HepG2 (cell line): ENCODE measurements at regions of chr6 and their contacts with region 1.

Region 1: GRCh38 chr6:13574149-13574570 is 241 bp upstream of the SIRT5 start:
- DNase-seq: peak; percentile 96
- ATAC-seq: peak; percentile 92
- H3K4me3 ChIP-seq: peak overlapping the region; percentile 87 to 94 (median 88)
- H3K27ac ChIP-seq: peak overlapping the region; percentile 99
- H3K4me1 ChIP-seq: peaks cover 40% of the 10 kb centered on the region
- H3K27me3 ChIP-seq: no peaks in the 10 kb centered on the region
- CTCF ChIP-seq: peak; percentile 45; the same call in 1 of the 2 replicates
- EP300 ChIP-seq: no peak; a peak in 1 of 4 replicates
- POLR2A ChIP-seq: peak in 1 of 2 experiments; percentile 84; a peak in 2 of 4 replicates
- RAD21 ChIP-seq: peak; percentile 85

Region 2: DNA sequence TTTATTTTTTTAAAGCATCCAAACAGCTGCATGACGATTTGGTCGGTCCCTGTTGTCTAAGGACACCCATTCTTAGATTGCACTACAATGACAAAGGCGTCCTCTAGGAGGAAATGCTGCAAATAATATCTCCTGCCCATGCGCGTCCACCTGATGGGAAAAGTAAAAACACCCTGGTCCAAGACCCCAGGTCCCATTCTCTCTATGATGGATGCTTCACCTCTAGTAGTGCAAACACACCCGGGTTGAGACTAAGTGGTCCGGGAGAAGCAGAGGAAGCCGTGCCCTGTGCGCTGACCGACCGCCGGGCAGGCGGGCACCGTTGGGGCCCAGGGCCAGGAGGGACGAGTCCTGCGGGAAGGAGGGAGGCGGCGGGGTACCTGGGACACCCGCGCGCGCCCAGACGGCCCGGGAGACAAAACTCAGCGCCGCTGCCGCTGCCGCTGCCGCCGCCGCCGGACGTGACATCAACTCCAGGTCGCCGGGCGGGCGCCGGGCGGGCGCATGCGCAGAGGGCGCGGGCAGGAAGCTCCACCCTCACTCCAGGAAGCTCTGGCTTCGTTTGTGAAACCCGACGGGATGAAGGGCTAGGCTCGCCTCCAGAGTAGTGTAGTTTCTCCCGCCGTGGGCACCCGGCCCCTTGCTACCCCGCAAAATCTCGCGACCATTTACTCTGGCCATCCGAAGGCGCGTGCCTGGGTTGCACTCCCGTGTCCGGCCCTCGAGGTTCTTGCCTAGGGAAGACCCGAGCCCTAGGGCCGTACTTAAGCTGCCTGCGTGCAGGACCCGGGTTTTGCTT is 245.9 kb before region 1 on chr6 and contains the start of gene TBC1D7:
- CTCF ChIA-PET with region 1: no interaction called
- POLR2A ChIA-PET with region 1: interaction called, 24 read pairs
- in situ Hi-C with region 1: no loop called
- intact Hi-C with region 1: no loop called
- DNase-seq: peak; percentile 92
- ATAC-seq: peak; percentile 92
- H3K4me3 ChIP-seq: peak within 1 kb of the TSS; percentile 72 to 92 (median 90)
- H3K27ac ChIP-seq: peak within 1 kb of the TSS; percentile 81
- H3K4me1 ChIP-seq: peaks cover 45% of the 10 kb centered on the region
- H3K27me3 ChIP-seq: peaks cover 0 to 4% of the 10 kb centered on the region in 2 experiments; a peak in 2 of 5 replicates
- CTCF ChIP-seq: peak; percentile 28
- EP300 ChIP-seq: no peak
- POLR2A ChIP-seq: peak; percentile 74 to 94
- RAD21 ChIP-seq: peak; percentile 22; the same call in 1 of the 2 replicates
- total RNA-seq, gene TBC1D7: 23.3 and 28.5 TPM in 2 replicates

Region 3: DNA sequence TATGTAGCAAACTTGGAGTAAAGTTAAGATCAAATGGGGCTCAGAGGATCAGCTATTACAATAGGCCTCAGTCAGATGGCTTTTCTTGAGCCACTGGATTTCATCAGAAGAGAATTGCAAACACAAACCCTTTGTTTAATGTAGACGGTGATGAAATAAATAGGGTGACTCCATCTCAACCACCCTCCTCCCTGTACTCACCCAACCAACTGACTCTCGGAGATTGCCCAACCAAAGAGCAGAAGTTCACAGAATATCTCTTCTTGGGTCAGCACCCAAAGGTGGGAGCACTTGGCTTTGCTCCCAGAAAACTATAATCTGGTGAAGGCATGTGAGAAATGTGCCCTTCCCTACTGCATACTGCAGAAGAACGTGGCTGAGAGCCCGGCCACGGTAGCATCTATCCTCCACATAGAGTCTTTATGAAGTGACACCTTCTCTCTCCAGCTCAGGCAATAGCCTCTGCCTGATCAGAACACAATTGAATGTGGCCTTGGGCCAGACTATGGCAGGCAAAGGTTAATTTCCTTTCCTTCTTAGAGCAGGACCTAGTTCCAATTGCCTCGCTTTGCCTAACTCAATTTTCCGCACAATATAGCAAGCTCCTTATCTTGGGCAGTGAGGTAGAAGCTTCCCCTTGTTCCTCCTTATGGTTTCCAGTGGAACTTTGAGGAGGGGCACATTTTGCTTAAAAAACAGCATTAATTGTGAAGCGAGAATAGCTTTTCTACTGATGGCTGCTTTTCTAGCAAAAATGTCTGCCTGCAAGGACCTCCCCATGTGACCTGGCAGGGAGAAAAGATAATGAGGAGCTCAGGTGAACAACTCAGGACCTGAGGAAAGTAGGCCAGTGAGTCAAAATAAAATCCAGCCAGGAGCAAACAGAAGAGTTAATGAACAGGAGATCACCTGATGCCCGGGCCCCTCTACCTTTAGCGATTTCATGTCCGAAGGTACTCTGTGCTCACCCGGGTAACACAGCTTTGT is 166.2 kb before region 1 on chr6:
- CTCF ChIA-PET with region 1: no interaction called
- POLR2A ChIA-PET with region 1: interaction called, 26 read pairs
- in situ Hi-C with region 1: no loop called
- intact Hi-C with region 1: no loop called
- DNase-seq: peak; percentile 100
- ATAC-seq: peak; percentile 82
- H3K4me3 ChIP-seq: peak overlapping the region; percentile 8 to 23 (median 19); a peak in 4 of 6 replicates
- H3K27ac ChIP-seq: peak overlapping the region; percentile 78
- H3K4me1 ChIP-seq: peaks cover 74% of the 10 kb centered on the region
- H3K27me3 ChIP-seq: no peaks in the 10 kb centered on the region
- CTCF ChIP-seq: no peak
- EP300 ChIP-seq: peak; percentile 91 to 96
- POLR2A ChIP-seq: peak in 1 of 2 experiments; percentile 39; a peak in 1 of 4 replicates
- RAD21 ChIP-seq: peak; percentile 12; the same call in 1 of the 2 replicates

Region 4: DNA sequence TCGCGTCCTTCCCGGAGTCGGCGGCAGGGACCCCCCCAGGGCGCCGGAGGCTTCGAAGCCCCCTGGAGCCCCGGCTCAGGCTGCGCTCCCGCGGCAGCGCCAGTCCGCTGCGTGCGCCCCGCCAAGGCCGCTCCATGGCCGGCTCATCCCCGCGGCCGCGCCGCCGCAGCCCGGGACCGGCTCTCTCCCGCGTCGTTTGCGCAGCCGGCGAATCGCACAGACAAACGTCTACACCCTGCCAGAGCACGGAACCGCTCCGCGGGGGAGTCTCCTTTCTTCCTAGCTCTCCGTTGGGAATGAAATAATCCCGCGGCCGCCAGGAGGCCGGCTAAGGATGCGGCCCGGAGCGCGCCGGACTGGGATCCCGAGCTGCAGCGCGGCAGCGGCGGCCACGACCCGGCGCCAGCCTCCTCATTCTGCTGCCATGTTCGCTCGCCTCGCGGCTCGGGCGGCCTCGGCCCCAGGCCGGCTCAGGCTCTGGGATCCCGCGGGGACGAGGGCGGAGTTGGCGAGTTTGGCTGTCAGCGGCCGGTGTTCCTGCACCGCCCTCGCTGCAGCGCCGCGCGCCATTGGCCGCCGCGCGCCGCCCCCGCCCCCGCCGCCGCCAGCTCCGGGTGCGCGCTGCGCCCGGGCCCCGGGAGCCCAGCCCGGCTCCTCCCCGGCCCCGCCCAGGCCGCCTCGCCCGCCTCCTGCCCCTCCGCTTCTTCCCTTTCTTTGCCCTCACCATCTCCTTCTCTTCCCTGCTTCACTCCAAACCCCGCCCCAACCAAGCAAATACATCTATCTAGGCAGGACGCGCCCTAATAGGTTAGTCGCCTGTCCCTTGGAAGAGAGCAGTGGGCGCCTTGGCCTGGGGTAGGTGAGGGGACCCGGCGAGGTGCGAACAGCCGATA is 86.8 kb before region 1 on chr6 and contains the start of gene GFOD1:
- CTCF ChIA-PET with region 1: no interaction called
- POLR2A ChIA-PET with region 1: interaction called, 22 read pairs
- in situ Hi-C with region 1: no loop called
- intact Hi-C with region 1: loop called (anchors 1 kb)
- DNase-seq: peak; percentile 63
- ATAC-seq: peak; percentile 80
- H3K4me3 ChIP-seq: peak within 1 kb of the TSS; percentile 69 to 82 (median 80)
- H3K27ac ChIP-seq: peak within 1 kb of the TSS; percentile 25
- H3K4me1 ChIP-seq: peaks cover 47% of the 10 kb centered on the region
- H3K27me3 ChIP-seq: no peaks in the 10 kb centered on the region; a peak in 1 of 5 replicates
- CTCF ChIP-seq: no peak
- EP300 ChIP-seq: no peak
- POLR2A ChIP-seq: peak; percentile 44 to 70; a peak in 3 of 4 replicates
- RAD21 ChIP-seq: peak; percentile 76
- total RNA-seq, gene GFOD1: 6.4 TPM in 2 replicates

Region 5: DNA sequence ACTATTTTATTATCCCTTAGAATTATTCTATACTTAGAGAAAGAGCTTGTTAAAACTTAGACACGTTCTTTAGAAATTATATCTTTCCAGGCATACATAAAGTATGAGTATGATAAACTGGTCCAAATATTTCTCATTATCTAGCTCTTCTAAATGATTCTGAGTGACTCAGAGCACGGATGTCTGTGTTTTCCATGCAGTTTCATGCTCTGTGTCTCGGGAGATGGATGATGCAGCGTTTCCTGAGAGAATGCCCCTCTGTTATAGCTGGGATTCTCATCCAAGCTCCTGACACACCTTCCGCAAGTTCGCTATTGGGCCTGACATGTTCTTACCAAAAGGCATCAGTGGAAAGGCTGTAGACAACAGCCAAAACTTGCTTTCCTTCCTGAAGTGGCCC is 19.6 kb after region 1 on chr6:
- CTCF ChIA-PET with region 1: no interaction called
- POLR2A ChIA-PET with region 1: interaction called, 15 read pairs
- in situ Hi-C with region 1: no loop called
- intact Hi-C with region 1: no loop called
- DNase-seq: no peak
- ATAC-seq: no peak
- H3K4me3 ChIP-seq: no peak overlapping the region
- H3K27ac ChIP-seq: no peak overlapping the region
- H3K4me1 ChIP-seq: no peaks in the 10 kb centered on the region
- H3K27me3 ChIP-seq: no peaks in the 10 kb centered on the region
- CTCF ChIP-seq: no peak
- EP300 ChIP-seq: no peak
- POLR2A ChIP-seq: no peak
- RAD21 ChIP-seq: no peak

Region 6: DNA sequence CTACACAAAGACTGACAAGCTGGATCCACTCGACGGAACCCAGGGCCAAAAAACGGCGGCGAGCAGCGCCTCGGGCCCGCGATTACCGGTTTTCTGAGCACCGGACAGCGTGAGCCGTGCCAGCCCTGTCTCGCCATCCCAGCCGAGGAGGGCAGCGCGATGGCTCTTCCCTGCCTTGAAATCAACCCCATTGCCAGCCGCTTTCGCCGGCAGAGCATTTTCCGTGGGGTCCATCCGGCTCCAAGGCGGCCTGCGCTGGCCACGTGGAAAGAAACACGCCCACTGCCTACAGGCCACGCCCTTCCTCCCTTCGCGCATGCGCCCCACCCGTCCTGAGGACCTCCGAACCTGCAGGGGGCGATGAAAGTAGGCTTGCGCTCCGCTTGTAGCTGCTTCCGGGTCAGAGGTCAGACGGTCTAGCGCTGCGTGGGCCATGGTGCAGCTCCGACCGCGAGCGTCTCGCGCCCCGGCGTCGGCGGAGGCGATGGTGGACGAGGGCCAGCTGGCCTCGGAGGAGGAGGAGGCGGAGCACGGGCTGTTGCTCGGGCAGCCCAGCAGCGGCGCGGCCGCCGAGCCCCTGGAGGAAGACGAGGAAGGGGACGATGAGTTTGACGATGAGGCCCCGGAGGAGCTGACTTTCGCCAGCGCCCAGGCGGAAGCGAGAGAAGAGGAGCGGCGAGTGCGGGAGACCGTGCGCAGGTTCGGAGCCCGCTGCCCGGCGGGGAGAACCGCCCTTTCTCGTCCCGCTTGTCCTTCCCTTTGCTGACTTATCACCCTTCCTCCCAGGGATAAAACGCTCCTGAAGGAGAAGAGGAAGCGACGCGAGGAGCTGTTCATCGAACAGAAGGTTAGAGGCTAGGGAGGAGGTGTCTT is 41.0 kb after region 1 on chr6 and contains the start of gene NOL7:
- CTCF ChIA-PET with region 1: no interaction called
- POLR2A ChIA-PET with region 1: interaction called, 119 read pairs
- in situ Hi-C with region 1: loop called (anchors 5 kb)
- intact Hi-C with region 1: loop called (anchors 1 kb)
- DNase-seq: peak; percentile 97
- ATAC-seq: peak; percentile 92
- H3K4me3 ChIP-seq: peak within 1 kb of the TSS; percentile 89 to 97 (median 93)
- H3K27ac ChIP-seq: peak within 1 kb of the TSS; percentile 91
- H3K4me1 ChIP-seq: peaks cover 35% of the 10 kb centered on the region
- H3K27me3 ChIP-seq: no peaks in the 10 kb centered on the region; a peak in 1 of 5 replicates
- CTCF ChIP-seq: peak; percentile 100
- EP300 ChIP-seq: peak in 1 of 2 experiments; percentile 11; a peak in 1 of 4 replicates
- POLR2A ChIP-seq: peak; percentile 93 to 96
- RAD21 ChIP-seq: peak; percentile 55; the same call in 1 of the 2 replicates
- total RNA-seq, gene NOL7: 186 and 215 TPM in 2 replicates

Region 7: DNA sequence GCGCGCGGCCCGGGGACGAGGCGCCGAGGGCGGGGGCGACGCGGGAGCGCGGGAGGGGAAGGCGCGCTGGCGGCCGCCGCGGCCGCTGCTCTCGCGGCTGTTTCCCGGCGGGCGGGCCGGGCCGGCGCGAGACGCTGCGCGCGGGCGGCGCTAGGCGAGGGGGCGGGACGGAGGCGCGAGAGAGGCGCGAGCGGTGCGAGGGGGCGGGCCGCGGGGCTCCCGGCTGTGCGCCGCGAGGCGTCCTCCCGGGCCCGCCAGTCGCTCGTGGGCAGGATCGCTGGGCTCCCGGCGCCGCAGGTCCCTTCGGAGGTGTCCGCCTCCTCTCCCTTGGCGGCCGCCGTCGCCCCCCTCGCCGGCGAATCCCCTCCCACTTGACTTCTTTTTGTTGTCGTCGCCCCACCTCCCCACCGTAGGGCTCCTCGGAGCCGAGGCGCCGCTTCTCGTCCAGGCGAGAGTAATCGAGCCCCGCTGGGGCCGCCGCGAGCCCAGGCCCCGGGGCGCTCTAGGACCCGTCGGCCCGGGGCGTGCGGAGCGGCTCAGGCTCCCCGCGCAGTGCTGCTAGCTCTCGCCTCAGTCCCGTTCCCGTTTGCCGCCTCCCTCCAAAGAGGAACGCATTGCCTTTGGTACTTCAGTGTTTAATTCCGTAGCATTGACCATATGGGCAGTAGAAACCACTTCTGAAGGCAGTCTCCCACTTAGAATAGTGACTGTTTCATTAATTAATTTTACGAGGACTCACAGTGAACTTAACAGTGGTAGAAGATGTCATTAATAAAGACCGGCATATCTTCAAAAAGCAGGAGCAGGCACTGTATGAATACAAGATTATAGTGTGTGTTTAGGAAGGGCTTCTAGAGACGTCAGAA is 137.8 kb after region 1 on chr6 and contains the start of gene RANBP9:
- CTCF ChIA-PET with region 1: no interaction called
- POLR2A ChIA-PET with region 1: interaction called, 12 read pairs
- in situ Hi-C with region 1: no loop called
- intact Hi-C with region 1: no loop called
- DNase-seq: peak; percentile 84
- ATAC-seq: peak; percentile 88
- H3K4me3 ChIP-seq: peak within 1 kb of the TSS; percentile 92 to 97 (median 95)
- H3K27ac ChIP-seq: peak within 1 kb of the TSS; percentile 93
- H3K4me1 ChIP-seq: peaks cover 49% of the 10 kb centered on the region
- H3K27me3 ChIP-seq: no peaks in the 10 kb centered on the region; a peak in 1 of 5 replicates
- CTCF ChIP-seq: peak; percentile 34; the same call in 1 of the 2 replicates
- EP300 ChIP-seq: peak in 1 of 2 experiments; percentile 39; a peak in 1 of 4 replicates
- POLR2A ChIP-seq: peak; percentile 84
- RAD21 ChIP-seq: no peak
- total RNA-seq, gene RANBP9: 30.6 and 40.8 TPM in 2 replicates

Region 8: DNA sequence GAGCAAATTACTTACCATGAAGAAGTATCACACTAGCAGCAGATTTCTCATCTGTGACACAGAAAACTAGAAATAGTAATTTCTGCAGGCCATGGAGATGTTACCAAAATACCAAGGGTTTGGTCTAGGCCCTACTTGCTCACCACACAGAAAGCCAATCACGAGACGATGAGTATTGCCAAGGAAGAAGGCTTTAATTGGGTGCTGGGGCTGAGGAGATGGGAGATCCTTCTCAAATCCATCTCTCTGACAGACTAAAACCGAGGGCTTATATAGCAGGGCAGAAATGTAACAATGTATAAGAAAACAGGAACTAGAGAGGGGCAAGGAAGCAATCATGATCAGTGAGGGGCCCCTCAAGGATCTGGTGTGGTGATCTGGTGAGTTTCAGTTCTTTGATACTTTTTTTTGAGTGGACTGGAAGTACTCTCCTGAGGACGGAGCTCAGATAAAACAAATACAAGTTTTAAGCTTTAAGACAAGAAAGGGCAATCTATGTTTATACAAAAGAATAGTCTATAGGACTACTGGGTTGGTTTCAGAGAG is 391.5 kb after region 1 on chr6:
- CTCF ChIA-PET with region 1: no interaction called
- POLR2A ChIA-PET with region 1: no interaction called
- in situ Hi-C with region 1: no loop called
- intact Hi-C with region 1: no loop called
- DNase-seq: no peak
- ATAC-seq: no peak
- H3K4me3 ChIP-seq: no peak overlapping the region
- H3K27ac ChIP-seq: no peak overlapping the region
- H3K4me1 ChIP-seq: no peaks in the 10 kb centered on the region
- H3K27me3 ChIP-seq: no peaks in the 10 kb centered on the region; a peak in 1 of 5 replicates
- CTCF ChIP-seq: no peak
- EP300 ChIP-seq: no peak
- POLR2A ChIP-seq: no peak
- RAD21 ChIP-seq: no peak